GM10248 (cell line): ENCODE measurements at regions of chr9 and their contacts with region 1.

Region 1: GRCh38 chr9:116737152-116737546 is 50.0 kb downstream of the TRIM32 start:
- DNase-seq: peak; percentile 82
- CTCF ChIP-seq: peak; percentile 91

Region 2: DNA sequence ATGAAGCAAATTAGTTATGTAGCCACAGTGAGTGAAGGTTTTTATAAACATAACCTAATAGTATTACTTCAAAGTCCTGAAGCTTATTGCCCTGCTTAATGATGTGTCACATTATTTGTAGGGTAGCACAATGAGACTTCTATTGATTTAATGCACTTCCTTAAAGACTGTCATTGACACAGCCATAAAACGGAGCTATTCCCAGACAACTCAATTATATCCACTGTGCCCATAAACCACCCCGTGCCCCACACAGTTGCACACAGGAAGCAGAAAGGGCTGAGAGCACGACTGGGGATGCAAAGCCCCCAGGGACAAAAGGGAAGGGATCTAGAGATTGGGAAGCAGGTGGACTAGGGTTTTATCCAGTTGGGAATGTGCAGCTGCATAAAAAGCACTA is 13.0 kb before region 1 on chr9:
- CTCF ChIA-PET with region 1: interaction called, 87 read pairs
- POLR2A ChIA-PET with region 1: no interaction called
- DNase-seq: no peak
- CTCF ChIP-seq: no peak

Region 3: GRCh38 chr9:116749176-116749575 is 12.0 kb after region 1 on chr9:
- CTCF ChIA-PET with region 1: interaction called, 16 read pairs
- POLR2A ChIA-PET with region 1: no interaction called
- DNase-seq: no peak
- CTCF ChIP-seq: no peak

Region 4: GRCh38 chr9:116760636-116761035 is 23.5 kb after region 1 on chr9:
- CTCF ChIA-PET with region 1: interaction called, 15 read pairs
- POLR2A ChIA-PET with region 1: no interaction called
- DNase-seq: no peak
- CTCF ChIP-seq: no peak

Region 5: GRCh38 chr9:116795821-116796220 is 58.7 kb after region 1 on chr9:
- CTCF ChIA-PET with region 1: interaction called, 11 read pairs
- POLR2A ChIA-PET with region 1: no interaction called
- DNase-seq: no peak
- CTCF ChIP-seq: no peak

Region 6: GRCh38 chr9:117411548-117411947 is 674.4 kb after region 1 on chr9:
- CTCF ChIA-PET with region 1: interaction called, 29 read pairs
- POLR2A ChIA-PET with region 1: no interaction called
- DNase-seq: peak; percentile 41
- CTCF ChIP-seq: peak; percentile 49